Activated CD4-positive, alpha-beta T cell treated with anti-CD3 and anti-CD28 coated beads, Interleukin-2, amount 10 ng/mL, durations not matched to agents 24 days and 14 days (primary cell): ENCODE measurements at regions of chr16 and their contacts with region 1.

Region 1: DNA sequence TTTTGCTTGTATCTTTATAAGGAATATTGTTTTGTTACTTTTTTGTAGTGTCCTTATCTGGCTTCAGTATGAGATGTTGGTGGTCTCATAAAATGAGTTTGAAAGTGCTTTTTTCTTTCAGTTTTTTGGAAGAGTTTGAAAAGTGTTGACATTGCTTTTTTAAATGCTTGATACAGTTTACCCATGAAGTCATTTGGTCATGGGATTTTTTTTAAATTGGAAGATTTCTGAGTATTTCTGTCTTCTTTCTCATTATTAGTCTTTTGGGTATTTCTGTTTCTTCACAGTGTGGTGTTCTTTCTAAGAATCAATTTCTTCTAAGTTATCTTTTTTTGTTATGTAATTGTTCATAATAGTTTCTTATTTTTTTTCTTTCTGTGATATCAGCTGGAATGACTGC is 15.1 kb downstream of the ZNF267 start:
- DNase-seq: no peak
- H3K4me3 Mint-ChIP-seq: peak overlapping the region; percentile 54
- H3K27ac Mint-ChIP-seq: peak overlapping the region; percentile 90
- H3K4me1 Mint-ChIP-seq: peaks cover 31% of the 10 kb centered on the region
- H3K27me3 Mint-ChIP-seq: no peaks in the 10 kb centered on the region

Region 2: GRCh38 chr16:31767267-31767666 is 121.5 kb before region 1 on chr16:
- intact Hi-C with region 1: no loop called
- DNase-seq: no peak
- H3K4me3 Mint-ChIP-seq: no peak overlapping the region
- H3K27ac Mint-ChIP-seq: no peak overlapping the region
- H3K4me1 Mint-ChIP-seq: no peaks in the 10 kb centered on the region
- H3K27me3 Mint-ChIP-seq: no peaks in the 10 kb centered on the region

Region 3: DNA sequence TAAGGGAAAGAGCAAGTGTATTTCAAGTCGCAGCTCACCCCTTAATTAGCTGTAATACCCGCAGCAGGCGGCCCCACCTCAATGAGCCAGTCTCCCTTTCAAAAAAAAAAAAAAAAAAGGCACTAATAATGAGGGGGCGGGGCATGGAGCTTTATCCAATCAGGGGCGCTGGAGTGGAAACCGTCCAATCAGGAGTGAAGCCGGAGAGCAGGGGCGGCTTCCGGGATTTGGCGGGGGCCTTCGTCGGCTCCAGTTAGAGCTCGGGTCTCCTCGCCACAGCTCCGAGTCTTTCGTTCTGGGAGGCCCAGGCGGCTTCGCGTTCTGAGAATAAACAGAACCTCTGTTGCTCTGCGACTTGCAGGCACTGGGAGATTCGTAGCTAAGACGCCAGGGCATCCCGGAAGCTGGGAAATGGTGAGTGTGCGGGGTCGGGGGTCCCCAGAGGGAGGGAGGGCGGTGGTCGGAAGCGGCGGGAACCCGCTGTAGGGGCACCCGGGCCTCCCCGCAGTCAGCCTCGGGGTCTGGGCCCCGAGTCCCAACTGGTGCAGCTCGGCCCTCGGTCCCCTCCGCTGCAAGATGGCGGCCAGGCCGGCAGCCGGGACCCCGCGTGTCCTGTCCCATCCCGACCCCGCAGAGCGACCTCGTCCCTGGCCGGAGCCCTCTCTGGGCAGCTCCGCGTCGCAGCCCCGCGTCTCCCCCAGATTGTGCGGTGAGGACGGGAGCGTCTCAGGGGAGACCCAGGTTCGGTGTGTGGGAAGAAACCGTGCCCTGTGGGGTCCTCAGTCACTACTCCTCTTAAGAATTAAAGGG is 15.0 kb before region 1 on chr16 and contains the start of gene ZNF267:
- intact Hi-C with region 1: loop called (anchors 1 kb)
- DNase-seq: peak; percentile 98
- H3K4me3 Mint-ChIP-seq: peak within 1 kb of the TSS; percentile 90
- H3K27ac Mint-ChIP-seq: peak within 1 kb of the TSS; percentile 94
- H3K4me1 Mint-ChIP-seq: peaks cover 66% of the 10 kb centered on the region
- H3K27me3 Mint-ChIP-seq: no peaks in the 10 kb centered on the region
- total RNA-seq, gene ZNF267: 77.7 and 78.3 TPM in 2 replicates